ENCODE measurements at regions of chr5 and their contacts with region 1.

Region 1: GRCh38 chr5:157142317-157143126 is at the start of gene MED7:
- DNase-seq: peak; percentile 96

Region 2: DNA sequence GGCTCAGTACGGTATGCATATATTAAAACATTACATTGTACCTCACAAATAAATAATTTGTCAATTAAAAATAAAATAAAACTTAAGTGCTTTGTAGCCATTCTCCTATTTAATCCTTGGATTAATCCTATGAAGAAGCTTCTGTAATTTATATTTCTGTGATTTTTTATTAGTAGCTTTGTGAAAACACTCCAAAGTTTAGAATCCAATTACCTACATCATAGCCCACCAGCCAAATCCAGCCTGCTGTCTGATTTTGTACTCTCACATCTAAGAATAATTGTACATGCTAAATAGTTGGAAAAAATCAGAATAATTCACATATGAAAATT is 10.3 kb before region 1 on chr5:
- CTCF ChIA-PET with region 1: interaction called, 9 read pairs
- POLR2A ChIA-PET with region 1: interaction called, 22 read pairs
- DNase-seq: no peak

Region 3: GRCh38 chr5:157157293-157157891 is 14.9 kb after region 1 on chr5:
- CTCF ChIA-PET with region 1: no interaction called
- POLR2A ChIA-PET with region 1: interaction called, 12 read pairs
- DNase-seq: no peak

Measured in HEK293T (cell line).